ENCODE measurements at regions of chr1 and their contacts with region 1.

Region 1: DNA sequence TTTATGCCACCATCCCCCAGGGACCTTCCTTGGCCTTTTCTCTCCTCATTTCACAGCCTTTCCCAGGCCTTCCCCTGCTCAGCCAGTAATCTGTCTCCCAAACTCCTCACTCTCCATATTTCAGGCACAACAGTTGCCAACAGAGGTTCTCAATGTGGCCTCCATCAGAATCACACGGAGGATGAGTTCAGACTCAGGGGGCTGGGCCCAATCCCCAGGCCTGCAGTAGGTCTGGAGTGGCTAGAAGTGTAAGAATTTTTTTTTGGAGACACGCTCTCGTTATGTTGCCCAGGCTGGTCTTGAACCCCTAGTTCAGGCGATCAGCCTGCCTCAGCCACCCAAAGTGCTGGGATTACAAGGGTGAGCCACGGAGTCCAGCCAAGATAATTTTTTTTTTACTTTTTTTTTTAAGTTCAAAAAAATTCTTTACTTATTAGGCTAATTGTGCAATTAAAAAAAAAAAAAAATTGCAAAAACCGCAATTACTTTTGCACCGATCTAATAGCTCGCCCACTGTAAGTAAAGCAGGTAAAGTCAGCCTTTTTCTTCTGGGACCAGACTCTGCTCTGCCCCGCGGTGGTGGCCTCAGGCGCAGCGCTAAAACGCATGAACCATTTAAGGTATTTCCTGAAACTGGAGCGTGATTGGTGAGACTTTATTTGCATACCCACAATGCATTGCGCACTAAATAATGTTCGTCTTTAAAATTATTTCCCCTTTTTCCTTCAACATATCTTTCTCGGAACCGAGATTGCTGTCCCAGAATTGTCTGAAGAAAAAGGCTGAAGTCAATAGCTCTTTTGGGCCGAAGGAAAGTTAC is 18.7 kb downstream of the KIAA2013 start:
- DNase-seq: peak; percentile 85
- H3K4me3 ChIP-seq: peak overlapping the region in 1 of 2 experiments; percentile 1; a peak in 1 of 4 replicates
- H3K27ac ChIP-seq: peak overlapping the region; percentile 95 to 98
- H3K4me1 ChIP-seq: peaks cover 0 to 3% of the 10 kb centered on the region in 2 experiments; a peak in 1 of 4 replicates
- H3K27me3 ChIP-seq: no peaks in the 10 kb centered on the region
- CTCF ChIP-seq: peak; percentile 74
- EP300 ChIP-seq: no peak
- RAD21 ChIP-seq: peak; percentile 64

Region 2: DNA sequence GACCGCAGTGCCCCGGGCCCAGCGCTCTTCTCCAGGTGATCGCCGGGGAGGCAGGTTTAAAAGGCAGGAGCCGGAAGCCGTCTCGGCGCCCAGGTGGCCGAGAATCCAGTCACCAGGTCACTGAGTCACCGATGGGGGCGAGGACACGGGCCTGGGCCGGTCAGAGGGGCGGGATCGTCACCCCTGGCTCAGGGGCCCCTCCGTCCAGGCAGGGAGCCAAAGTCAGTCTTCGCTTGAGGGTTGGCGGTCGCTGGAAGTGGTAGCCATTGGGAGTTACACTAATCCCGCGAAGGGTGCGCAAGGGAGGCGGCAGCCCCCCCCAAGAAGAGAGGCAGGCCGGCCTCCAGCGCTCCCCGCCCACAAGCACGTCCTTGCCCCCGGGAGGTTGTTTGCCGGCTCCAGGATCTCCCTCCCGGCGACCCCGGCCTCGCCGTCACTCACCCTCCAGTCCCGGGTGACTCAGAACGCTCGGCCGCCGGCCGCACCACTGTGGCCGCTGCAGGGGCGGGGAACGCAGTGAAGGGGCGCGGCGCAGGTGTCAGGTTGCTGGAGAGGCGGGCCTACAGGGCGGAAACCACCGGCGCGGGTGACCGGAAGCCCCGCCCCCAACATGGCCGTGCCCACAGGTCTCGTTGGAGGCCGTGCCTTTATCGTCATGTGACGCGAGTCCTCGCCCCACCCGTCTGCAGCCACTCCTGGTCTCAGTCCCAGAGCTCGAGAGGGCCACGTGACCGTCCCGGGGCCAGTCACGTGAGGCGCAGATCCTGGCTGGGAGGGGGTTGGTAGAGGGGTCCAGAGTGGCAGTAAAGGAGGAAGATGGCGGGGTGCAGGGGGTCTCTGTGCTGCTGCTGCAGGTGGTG is 101.8 kb before region 1 on chr1 and contains the starts of genes CLCN6 and MTHFR:
- CTCF ChIA-PET with region 1: no interaction called
- POLR2A ChIA-PET with region 1: interaction called, 15 read pairs
- DNase-seq: peak; percentile 99
- H3K4me3 ChIP-seq: peak within 1 kb of the TSS; percentile 87 to 96
- H3K27ac ChIP-seq: peak within 1 kb of the TSS; percentile 79 to 91
- H3K4me1 ChIP-seq: peaks cover 34 to 35% of the 10 kb centered on the region in 2 experiments; a peak in 3 of 4 replicates
- H3K27me3 ChIP-seq: no peaks in the 10 kb centered on the region
- CTCF ChIP-seq: no peak
- EP300 ChIP-seq: no peak
- RAD21 ChIP-seq: no peak
- polyA plus RNA-seq, gene CLCN6: 7.4 and 8.3 TPM in 2 replicates
- polyA plus RNA-seq, gene MTHFR: 5.3 and 7.6 TPM in 2 replicates

Region 3: DNA sequence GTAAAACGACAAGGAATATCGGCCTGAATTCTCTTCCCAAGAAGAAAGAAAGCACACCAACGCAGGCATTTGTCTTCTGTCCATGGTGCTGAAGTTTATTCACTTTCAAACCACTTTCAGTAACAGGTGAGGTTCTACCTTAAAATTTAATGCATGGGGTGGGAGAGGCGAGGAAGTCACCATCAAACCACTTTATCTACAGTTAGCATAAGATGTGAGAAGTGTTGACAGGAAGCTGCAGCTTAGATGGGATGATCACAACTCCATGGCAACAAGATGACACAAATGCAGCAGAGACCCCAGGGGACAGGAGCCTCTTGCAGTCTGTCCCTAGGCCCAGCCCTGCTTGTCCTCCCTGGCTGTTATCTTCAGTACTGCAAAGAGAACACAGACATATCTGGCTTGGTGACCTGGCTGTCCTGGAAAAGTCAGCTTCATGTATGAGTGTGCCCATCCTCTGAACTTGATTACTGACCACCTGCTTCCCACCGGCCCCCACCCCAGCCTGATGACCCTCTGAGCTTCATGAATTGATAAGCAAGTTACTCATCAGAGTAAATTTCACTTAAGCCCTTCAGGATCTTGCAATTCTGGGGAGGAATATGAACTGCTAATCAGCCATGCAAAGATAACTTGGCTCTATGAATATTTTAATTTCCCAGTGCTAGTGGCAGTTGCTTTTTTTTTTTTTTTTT is 61.7 kb before region 1 on chr1:
- CTCF ChIA-PET with region 1: interaction called, 316 read pairs
- POLR2A ChIA-PET with region 1: interaction called, 34 read pairs
- DNase-seq: peak; percentile 57
- H3K4me3 ChIP-seq: no peak overlapping the region
- H3K27ac ChIP-seq: peak overlapping the region in 1 of 2 experiments; percentile 56; a peak in 2 of 4 replicates
- H3K4me1 ChIP-seq: peaks cover 0 to 52% of the 10 kb centered on the region in 2 experiments; a peak in 2 of 4 replicates
- H3K27me3 ChIP-seq: no peaks in the 10 kb centered on the region
- CTCF ChIP-seq: no peak
- EP300 ChIP-seq: no peak
- RAD21 ChIP-seq: no peak

Region 4: DNA sequence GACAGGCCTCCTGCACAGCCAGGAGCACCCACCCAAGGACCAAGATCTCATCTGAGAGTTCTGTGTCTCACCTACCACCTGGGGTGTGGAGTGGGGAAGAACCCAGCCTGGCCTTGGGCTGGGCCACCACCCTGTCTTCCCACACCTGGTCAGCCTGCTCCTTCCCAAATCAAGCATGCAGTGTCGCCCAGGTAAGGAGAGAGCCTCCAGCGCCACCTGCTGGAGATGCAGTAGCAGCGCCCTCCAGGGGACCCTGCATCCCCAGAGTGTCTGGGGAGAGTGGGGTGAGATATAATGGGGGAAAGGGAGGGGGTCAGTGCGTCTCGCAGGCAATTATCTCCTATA is 13.6 kb before region 1 on chr1:
- CTCF ChIA-PET with region 1: interaction called, 11 read pairs
- POLR2A ChIA-PET with region 1: interaction called, 7 read pairs
- DNase-seq: peak; percentile 90
- H3K4me3 ChIP-seq: peak overlapping the region in 1 of 2 experiments; percentile 39; a peak in 1 of 4 replicates
- H3K27ac ChIP-seq: no peak overlapping the region
- H3K4me1 ChIP-seq: peaks cover 0 to 5% of the 10 kb centered on the region in 2 experiments; a peak in 1 of 4 replicates
- H3K27me3 ChIP-seq: 0 out of 2 replicates have a peak, but pooled peaks cover 6% of the 10 kb centered on the region
- CTCF ChIP-seq: peak; percentile 93
- EP300 ChIP-seq: no peak
- RAD21 ChIP-seq: peak; percentile 93

Region 5: DNA sequence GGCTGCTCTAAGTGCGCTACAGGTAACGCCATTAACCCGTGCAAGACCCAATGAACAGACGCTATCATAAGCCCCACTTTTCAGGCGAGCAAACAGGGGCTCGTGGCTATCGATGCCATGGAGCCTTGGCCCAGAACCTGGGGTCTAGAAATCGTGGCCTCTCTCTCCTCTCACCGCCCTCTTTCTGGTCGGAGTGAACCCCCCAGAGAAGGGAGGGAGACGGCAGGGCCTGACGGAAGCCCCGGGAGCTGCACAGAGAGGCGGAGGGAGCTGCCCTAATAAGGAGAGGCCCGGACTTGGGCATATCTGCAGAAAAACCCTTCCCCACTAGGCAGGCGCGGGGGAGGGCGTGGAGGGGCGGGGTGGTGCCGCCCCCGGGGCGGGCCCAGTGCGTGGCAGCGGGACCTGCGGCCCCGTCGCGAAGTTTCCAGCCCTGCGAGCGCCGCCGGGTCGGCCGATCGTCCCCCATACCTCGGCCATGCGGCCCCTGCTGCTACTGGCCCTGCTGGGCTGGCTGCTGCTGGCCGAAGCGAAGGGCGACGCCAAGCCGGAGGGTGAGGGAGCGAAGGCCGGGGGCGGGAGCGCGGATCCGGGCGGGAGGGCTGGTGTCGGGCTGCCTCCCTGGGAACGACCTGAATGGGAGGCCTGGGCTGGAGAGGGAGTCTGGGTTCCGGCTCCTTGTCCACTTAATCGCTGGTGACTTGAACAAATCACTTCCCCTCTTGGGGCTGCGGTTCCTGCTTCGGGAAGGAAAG is 27.0 kb after region 1 on chr1 and contains the start of gene PLOD1:
- CTCF ChIA-PET with region 1: interaction called, 8 read pairs
- POLR2A ChIA-PET with region 1: interaction called, 60 read pairs
- DNase-seq: peak; percentile 93
- H3K4me3 ChIP-seq: peak within 1 kb of the TSS; percentile 64 to 83
- H3K27ac ChIP-seq: peak within 1 kb of the TSS; percentile 74 to 91
- H3K4me1 ChIP-seq: peaks cover 25 to 57% of the 10 kb centered on the region in 2 experiments; a peak in 3 of 4 replicates
- H3K27me3 ChIP-seq: no peaks in the 10 kb centered on the region
- CTCF ChIP-seq: no peak
- EP300 ChIP-seq: no peak
- RAD21 ChIP-seq: no peak
- polyA plus RNA-seq, gene PLOD1: 204 and 257 TPM in 2 replicates

Region 6: DNA sequence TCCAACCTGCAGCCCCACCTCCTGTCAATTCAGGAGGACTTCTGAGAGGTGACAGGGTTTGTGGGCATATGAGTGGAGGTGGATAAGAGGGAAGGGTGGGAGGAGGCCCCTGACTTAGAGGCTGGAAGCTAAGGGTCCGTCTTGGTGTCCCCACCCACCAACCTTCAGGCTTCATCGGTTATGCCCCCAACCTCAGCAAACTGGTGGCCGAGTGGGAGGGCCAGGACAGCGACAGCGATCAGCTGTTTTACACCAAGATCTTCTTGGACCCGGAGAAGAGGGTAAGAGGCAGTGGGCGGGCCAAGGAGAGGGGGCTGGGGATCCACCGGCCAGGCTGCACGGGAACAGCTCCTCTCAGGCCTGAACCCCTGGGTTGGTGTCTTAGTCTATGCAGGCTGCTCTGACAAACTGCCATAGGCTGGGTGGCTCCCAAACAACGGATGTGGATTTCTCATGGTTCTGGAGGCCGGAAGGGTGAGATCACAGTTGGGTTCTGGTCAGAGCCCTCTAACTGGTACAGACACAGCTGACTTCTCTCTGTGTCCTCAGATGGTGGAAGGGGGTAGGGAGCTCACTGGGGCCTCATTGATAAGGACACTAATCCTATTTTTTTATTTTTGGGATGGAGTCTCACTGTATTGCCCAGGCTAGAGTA is 45.1 kb after region 1 on chr1:
- CTCF ChIA-PET with region 1: interaction called, 4 read pairs
- POLR2A ChIA-PET with region 1: interaction called, 39 read pairs
- DNase-seq: no peak
- H3K4me3 ChIP-seq: no peak overlapping the region
- H3K27ac ChIP-seq: peak overlapping the region in 1 of 2 experiments; percentile 81; a peak in 2 of 4 replicates
- H3K4me1 ChIP-seq: peaks cover 0 to 8% of the 10 kb centered on the region in 2 experiments; a peak in 1 of 4 replicates
- H3K27me3 ChIP-seq: no peaks in the 10 kb centered on the region
- CTCF ChIP-seq: no peak
- EP300 ChIP-seq: no peak
- RAD21 ChIP-seq: no peak

Region 7: GRCh38 chr1:11979851-11980675 is 72.6 kb after region 1 on chr1 and contains the start of gene MFN2:
- CTCF ChIA-PET with region 1: interaction called, 3 read pairs
- POLR2A ChIA-PET with region 1: interaction called, 37 read pairs
- DNase-seq: peak; percentile 99
- H3K4me3 ChIP-seq: peak within 1 kb of the TSS; percentile 80 to 96
- H3K27ac ChIP-seq: peak within 1 kb of the TSS; percentile 78 to 85
- H3K4me1 ChIP-seq: peaks cover 27 to 34% of the 10 kb centered on the region in 2 experiments; a peak in 2 of 4 replicates
- H3K27me3 ChIP-seq: no peaks in the 10 kb centered on the region
- CTCF ChIP-seq: no peak
- EP300 ChIP-seq: peak in 1 of 2 experiments; percentile 22; a peak in 1 of 4 replicates
- RAD21 ChIP-seq: no peak
- polyA plus RNA-seq, gene MFN2: 43.2 and 46.1 TPM in 2 replicates

Region 8: GRCh38 chr1:12069623-12070244 is 162.2 kb after region 1 on chr1:
- CTCF ChIA-PET with region 1: no interaction called
- POLR2A ChIA-PET with region 1: no interaction called
- DNase-seq: no peak
- H3K4me3 ChIP-seq: no peak overlapping the region
- H3K27ac ChIP-seq: no peak overlapping the region
- H3K4me1 ChIP-seq: no peaks in the 10 kb centered on the region
- H3K27me3 ChIP-seq: peaks cover 14% of the 10 kb centered on the region; the same call in 1 of the 2 replicates
- CTCF ChIP-seq: no peak
- EP300 ChIP-seq: no peak
- RAD21 ChIP-seq: no peak